A673 (cell line): ENCODE measurements at regions of chr4 and their contacts with region 1.

Region 1: DNA sequence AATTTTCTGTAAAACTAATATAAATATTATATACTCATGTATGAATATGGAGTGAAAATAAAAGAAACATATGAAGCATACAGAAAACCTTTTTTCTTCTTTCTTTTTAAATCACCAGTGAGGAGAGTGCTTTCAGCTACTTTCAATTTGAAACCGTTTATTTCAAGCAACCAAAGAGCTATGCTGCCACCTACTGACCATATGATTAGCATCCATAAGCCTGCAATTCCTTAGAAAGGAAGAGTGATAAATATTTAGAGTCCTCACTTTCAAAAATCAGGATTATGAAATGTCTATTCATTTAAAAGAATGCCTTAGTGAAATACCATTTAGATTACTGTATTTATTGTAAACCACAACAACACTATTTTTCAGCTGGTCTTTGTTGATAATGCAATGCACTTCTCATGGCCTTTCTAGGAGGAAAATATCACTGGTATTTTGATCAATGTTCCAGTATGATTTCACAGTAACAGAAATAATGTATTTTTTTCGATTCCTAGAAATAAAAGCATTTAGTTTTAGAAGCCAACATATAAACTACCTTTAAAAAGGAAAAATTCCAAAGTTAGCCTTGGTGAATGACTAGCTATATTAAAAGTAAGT is 667.6 kb downstream of the PCDH18 start:
- DNase-seq: peak; percentile 82
- H3K4me3 ChIP-seq: no peak overlapping the region
- H3K27ac ChIP-seq: no peak overlapping the region
- H3K4me1 ChIP-seq: peaks cover 9% of the 10 kb centered on the region
- H3K27me3 ChIP-seq: no peaks in the 10 kb centered on the region
- CTCF ChIP-seq: peak; percentile 87

Region 2: DNA sequence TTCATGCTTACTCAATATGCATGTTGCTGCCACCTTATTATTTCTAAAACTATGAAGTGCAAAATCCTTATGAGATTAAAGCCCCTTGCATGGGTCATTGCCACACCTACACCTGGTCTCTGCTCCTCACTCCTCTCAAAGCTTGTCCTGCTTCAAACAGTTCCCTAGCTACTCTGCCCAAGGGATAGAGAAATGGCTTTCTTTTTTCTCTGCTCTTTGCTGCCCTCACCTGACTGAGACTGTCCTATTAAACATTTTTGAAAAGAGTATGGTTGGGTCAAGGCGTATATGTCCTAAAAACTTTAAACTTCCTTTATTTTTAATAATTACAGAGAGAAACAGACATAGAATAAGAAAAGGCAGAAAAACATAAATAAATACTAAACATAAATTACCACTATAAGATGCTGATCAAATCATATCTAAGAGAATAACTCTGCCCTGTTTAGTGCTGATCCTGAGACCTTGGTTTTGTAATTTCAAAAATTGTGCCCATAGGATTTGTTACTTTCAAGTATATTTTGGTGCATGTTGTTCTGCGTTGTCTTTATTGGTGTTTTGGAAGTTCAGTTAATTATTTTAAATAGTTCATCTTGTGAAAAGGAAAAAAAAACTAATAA is 1958.2 kb before region 1 on chr4:
- CTCF ChIA-PET with region 1: no interaction called
- POLR2A ChIA-PET with region 1: no interaction called
- intact Hi-C with region 1: loop called (anchors 10 kb)
- DNase-seq: peak; percentile 18
- H3K4me3 ChIP-seq: no peak overlapping the region
- H3K27ac ChIP-seq: no peak overlapping the region
- H3K4me1 ChIP-seq: no peaks in the 10 kb centered on the region
- H3K27me3 ChIP-seq: no peaks in the 10 kb centered on the region
- CTCF ChIP-seq: peak; percentile 60

Region 3: GRCh38 chr4:136687118-136687517 is 177.6 kb before region 1 on chr4:
- CTCF ChIA-PET with region 1: interaction called, 8 read pairs
- POLR2A ChIA-PET with region 1: no interaction called
- intact Hi-C with region 1: loop called (anchors 2 kb)
- DNase-seq: peak; percentile 26
- H3K4me3 ChIP-seq: no peak overlapping the region
- H3K27ac ChIP-seq: no peak overlapping the region
- H3K4me1 ChIP-seq: no peaks in the 10 kb centered on the region
- H3K27me3 ChIP-seq: no peaks in the 10 kb centered on the region
- CTCF ChIP-seq: peak; percentile 57

Region 4: DNA sequence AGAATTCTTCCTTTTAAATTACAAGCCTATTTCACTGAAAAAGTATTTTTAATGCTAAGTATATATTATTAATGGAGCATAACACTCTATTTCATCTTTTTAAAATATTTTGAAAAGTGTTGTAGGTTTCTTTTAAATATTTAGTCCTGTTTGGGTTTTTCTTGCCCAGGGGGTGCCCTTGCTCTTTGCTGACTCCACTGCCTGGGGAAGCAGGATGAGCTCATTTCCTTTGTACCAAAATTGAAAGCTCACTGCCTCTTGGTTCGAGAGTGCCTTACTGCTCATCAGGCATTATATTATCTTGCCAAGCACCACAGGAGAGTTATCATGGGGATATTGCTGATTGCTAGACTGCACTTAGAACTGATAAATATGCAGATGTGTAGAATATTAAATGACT is 151.5 kb before region 1 on chr4:
- CTCF ChIA-PET with region 1: interaction called, 7 read pairs
- POLR2A ChIA-PET with region 1: no interaction called
- intact Hi-C with region 1: loop called (anchors 5 kb)
- DNase-seq: peak; percentile 73
- H3K4me3 ChIP-seq: no peak overlapping the region
- H3K27ac ChIP-seq: no peak overlapping the region
- H3K4me1 ChIP-seq: peaks cover 6% of the 10 kb centered on the region
- H3K27me3 ChIP-seq: no peaks in the 10 kb centered on the region
- CTCF ChIP-seq: no peak